H1 (cell line): ENCODE measurements at regions of chr12 and their contacts with region 1.

Region 1: DNA sequence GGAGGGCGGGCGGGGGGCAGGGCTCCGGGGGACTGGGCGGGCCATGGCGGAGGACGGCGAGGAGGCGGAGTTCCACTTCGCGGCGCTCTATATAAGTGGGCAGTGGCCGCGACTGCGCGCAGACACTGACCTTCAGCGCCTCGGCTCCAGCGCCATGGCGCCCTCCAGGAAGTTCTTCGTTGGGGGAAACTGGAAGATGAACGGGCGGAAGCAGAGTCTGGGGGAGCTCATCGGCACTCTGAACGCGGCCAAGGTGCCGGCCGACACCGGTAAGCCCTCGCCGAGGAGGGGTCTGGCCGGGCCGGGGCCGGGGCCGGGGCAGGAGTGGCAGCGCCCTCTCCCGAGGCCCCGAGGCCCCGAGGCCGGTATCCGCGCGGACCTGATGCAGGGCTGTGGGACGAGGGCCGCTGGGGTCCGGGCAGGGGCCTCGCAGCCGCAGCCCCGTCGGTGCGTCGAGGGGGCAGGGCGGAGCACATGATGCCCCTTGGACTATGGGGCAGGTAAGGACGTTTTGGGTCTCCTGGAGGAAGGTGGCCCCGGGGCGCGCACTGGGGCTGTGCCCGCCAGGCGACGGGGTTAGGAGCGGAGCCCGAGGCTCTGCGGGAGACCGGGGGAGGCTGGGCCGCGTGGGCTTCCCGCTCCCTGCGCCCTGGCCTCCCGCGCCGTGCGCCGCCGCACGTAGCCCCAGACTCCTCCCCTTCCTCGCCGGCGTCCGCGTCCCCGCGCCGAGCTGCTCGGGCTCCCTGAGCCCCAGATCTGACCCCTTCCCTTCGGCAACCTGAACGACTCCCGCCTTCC is at the start of gene TPI1:
- DNase-seq: peak in 1 of 2 experiments; percentile 67
- H3K4me3 ChIP-seq: peak within 1 kb of the TSS; percentile 84 to 98 (median 86)
- H3K27ac ChIP-seq: peak within 1 kb of the TSS; percentile 71
- H3K4me1 ChIP-seq: peaks cover 7 to 48% (median 25%) of the 10 kb centered on the region in 4 experiments
- H3K27me3 ChIP-seq: no peaks in the 10 kb centered on the region
- CTCF ChIP-seq: no peak
- EP300 ChIP-seq: no peak
- POLR2A ChIP-seq: peak in 1 of 2 experiments; percentile 97; a peak in 2 of 3 replicates
- RAD21 ChIP-seq: no peak
- total RNA-seq, gene TPI1: 902 and 910 TPM in 2 replicates

Region 2: GRCh38 chr12:6833189-6833890 is 34.3 kb before region 1 on chr12:
- CTCF ChIA-PET with region 1: interaction called, 19 read pairs
- POLR2A ChIA-PET with region 1: interaction called, 588 read pairs
- DNase-seq: no peak
- H3K4me3 ChIP-seq: no peak overlapping the region
- H3K27ac ChIP-seq: no peak overlapping the region
- H3K4me1 ChIP-seq: peaks cover 0 to 8% (median 4%) of the 10 kb centered on the region in 4 experiments; a peak in 5 of 7 replicates
- H3K27me3 ChIP-seq: no peaks in the 10 kb centered on the region
- CTCF ChIP-seq: no peak
- EP300 ChIP-seq: no peak
- POLR2A ChIP-seq: no peak
- RAD21 ChIP-seq: no peak

Region 3: DNA sequence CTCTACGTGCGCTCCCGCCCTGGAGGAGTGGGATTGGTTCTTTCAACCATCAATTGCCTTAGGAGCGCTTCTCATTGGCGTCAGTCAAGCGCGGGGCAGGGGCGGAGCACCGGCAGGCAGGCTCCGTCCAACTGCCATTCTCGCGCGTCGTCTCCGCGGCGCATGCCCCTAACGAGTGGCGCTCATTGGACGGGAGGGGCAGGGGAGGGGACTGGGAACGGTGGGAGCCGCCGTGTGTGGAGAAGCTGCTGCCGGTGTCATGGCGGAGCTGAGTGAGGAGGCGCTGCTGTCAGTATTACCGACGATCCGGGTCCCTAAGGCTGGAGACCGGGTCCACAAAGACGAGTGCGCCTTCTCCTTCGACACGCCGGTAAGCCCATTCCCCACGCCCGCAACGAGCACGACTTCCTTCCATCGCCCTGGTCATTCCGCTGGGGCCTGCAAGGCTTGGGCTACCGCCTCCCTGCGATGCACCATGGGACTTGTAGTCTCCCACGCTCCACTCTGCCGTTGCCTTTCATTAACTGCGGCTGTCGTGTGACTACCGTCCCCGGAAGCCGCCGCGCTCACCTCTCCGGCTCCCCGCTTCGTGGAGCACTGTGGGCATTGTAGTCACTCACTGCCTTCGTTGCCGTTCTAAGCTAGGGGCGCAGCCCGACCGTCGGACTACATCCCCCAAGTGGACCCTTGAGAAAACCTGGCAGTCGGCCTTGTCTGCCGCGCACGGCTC is 15.5 kb before region 1 on chr12 and contains the start of gene USP5:
- CTCF ChIA-PET with region 1: interaction called, 18 read pairs
- POLR2A ChIA-PET with region 1: interaction called, 588 read pairs
- DNase-seq: peak; percentile 94 to 99
- H3K4me3 ChIP-seq: peak within 1 kb of the TSS; percentile 79 to 94 (median 88)
- H3K27ac ChIP-seq: peak within 1 kb of the TSS; percentile 77; the same call in 1 of the 2 replicates
- H3K4me1 ChIP-seq: peaks cover 0 to 14% (median 3%) of the 10 kb centered on the region in 4 experiments; a peak in 5 of 7 replicates
- H3K27me3 ChIP-seq: no peaks in the 10 kb centered on the region
- CTCF ChIP-seq: no peak
- EP300 ChIP-seq: no peak
- POLR2A ChIP-seq: peak in 1 of 2 experiments; percentile 79; a peak in 2 of 3 replicates
- RAD21 ChIP-seq: no peak
- total RNA-seq, gene USP5: 148 and 159 TPM in 2 replicates

Region 4: GRCh38 chr12:6904280-6905278 is 37.0 kb after region 1 on chr12 and contains the start of gene LRRC23:
- CTCF ChIA-PET with region 1: interaction called, 18 read pairs
- POLR2A ChIA-PET with region 1: interaction called, 264 read pairs
- DNase-seq: peak; percentile 96 to 98
- H3K4me3 ChIP-seq: peak within 1 kb of the TSS; percentile 46 to 64 (median 52)
- H3K27ac ChIP-seq: peak within 1 kb of the TSS; percentile 76
- H3K4me1 ChIP-seq: peaks cover 3 to 12% (median 11%) of the 10 kb centered on the region in 4 experiments; a peak in 5 of 7 replicates
- H3K27me3 ChIP-seq: peaks cover 0 to 4% (median 0%) of the 10 kb centered on the region in 4 experiments; a peak in 4 of 7 replicates
- CTCF ChIP-seq: no peak
- EP300 ChIP-seq: peak in 1 of 2 experiments; percentile 72; a peak in 1 of 3 replicates
- POLR2A ChIP-seq: peak in 1 of 2 experiments; percentile 76; a peak in 1 of 3 replicates
- RAD21 ChIP-seq: no peak
- total RNA-seq, gene LRRC23: 2.5 and 2.9 TPM in 2 replicates

Region 5: GRCh38 chr12:6921996-6922946 is 54.7 kb after region 1 on chr12:
- CTCF ChIA-PET with region 1: interaction called, 83 read pairs
- POLR2A ChIA-PET with region 1: interaction called, 304 read pairs
- DNase-seq: no peak
- H3K4me3 ChIP-seq: no peak overlapping the region
- H3K27ac ChIP-seq: no peak overlapping the region
- H3K4me1 ChIP-seq: peaks cover 12 to 24% (median 16%) of the 10 kb centered on the region in 4 experiments
- H3K27me3 ChIP-seq: no peaks in the 10 kb centered on the region
- CTCF ChIP-seq: no peak
- EP300 ChIP-seq: no peak
- POLR2A ChIP-seq: no peak
- RAD21 ChIP-seq: no peak